ENCODE measurements at regions of chr12 and their contacts with region 1.

Region 1: GRCh38 chr12:18752280-18752920 is 14.5 kb downstream of the CAPZA3 start:
- DNase-seq: peak; percentile 25 to 55
- ATAC-seq: peak; percentile 21 to 73 (median 42)
- H3K4me3 ChIP-seq: no peak overlapping the region
- H3K27ac ChIP-seq: peak overlapping the region in 9 of 10 donors; percentile 67 to 90 (median 76)
- H3K4me1 ChIP-seq: peaks cover 6 to 65% (median 38%) of the 10 kb centered on the region in 9 donors
- H3K27me3 ChIP-seq: no peaks in the 10 kb centered on the region
- CTCF ChIP-seq: no peak

Region 2: DNA sequence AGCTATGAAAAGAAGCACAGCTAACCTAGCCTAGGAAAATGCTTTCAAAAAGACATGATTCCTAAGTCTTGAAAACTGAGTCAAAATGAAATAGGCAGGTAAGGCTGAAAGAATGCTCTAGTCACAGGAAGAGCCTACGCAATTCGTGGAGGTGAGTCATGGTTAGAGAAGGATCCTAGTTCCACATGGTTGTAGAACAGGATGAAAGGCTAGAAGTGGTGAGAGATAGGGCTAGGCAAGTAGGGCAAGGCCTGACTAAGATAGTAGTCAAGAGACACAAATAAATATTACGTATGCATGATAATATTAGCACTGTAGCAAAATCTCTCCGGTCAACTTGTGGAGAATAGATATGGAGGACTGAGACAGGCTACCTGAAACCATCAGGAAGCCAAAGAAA is 61.7 kb before region 1 on chr12:
- intact Hi-C with region 1: loop called in 1 of 10 experiments (anchors 5 kb)
- DNase-seq: no peak
- ATAC-seq: peak; percentile 46 to 98 (median 90)
- H3K4me3 ChIP-seq: no peak overlapping the region
- H3K27ac ChIP-seq: peak overlapping the region in 2 of 10 donors; percentile 37 to 49
- H3K4me1 ChIP-seq: peaks cover 0 to 9% (median 0%) of the 10 kb centered on the region in 9 donors
- H3K27me3 ChIP-seq: no peaks in the 10 kb centered on the region
- CTCF ChIP-seq: no peak

Region 3: GRCh38 chr12:18700271-18700670 is 52.1 kb before region 1 on chr12:
- intact Hi-C with region 1: loop called in 1 of 10 experiments (anchors 5 kb)
- DNase-seq: peak in 1 of 2 donors; percentile 48
- ATAC-seq: peak; percentile 83 to 99 (median 90)
- H3K4me3 ChIP-seq: no peak overlapping the region
- H3K27ac ChIP-seq: peak overlapping the region in 2 of 10 donors; percentile 29 to 53
- H3K4me1 ChIP-seq: peaks cover 0 to 11% (median 0%) of the 10 kb centered on the region in 9 donors
- H3K27me3 ChIP-seq: no peaks in the 10 kb centered on the region
- CTCF ChIP-seq: no peak

Region 4: GRCh38 chr12:18805516-18806248 is 53.3 kb after region 1 on chr12:
- intact Hi-C with region 1: loop called in 1 of 10 experiments (anchors 10 kb)
- DNase-seq: no peak
- ATAC-seq: peak in 2 of 8 donors; percentile 35 to 47
- H3K4me3 ChIP-seq: no peak overlapping the region
- H3K27ac ChIP-seq: peak overlapping the region in 1 of 10 donors; percentile 9
- H3K4me1 ChIP-seq: peaks cover 0 to 8% (median 0%) of the 10 kb centered on the region in 9 donors
- H3K27me3 ChIP-seq: no peaks in the 10 kb centered on the region
- CTCF ChIP-seq: peak in 2 of 9 donors; percentile 31

Region 5: GRCh38 chr12:19031032-19031431 is 278.6 kb after region 1 on chr12:
- intact Hi-C with region 1: loop called in 2 of 10 experiments (anchors 5 to 10 kb)
- DNase-seq: no peak
- ATAC-seq: peak in 5 of 8 donors; percentile 30 to 59 (median 50)
- H3K4me3 ChIP-seq: no peak overlapping the region
- H3K27ac ChIP-seq: no peak overlapping the region
- H3K4me1 ChIP-seq: peaks cover 0 to 14% (median 4%) of the 10 kb centered on the region in 9 donors
- H3K27me3 ChIP-seq: no peaks in the 10 kb centered on the region
- CTCF ChIP-seq: no peak

Region 6: DNA sequence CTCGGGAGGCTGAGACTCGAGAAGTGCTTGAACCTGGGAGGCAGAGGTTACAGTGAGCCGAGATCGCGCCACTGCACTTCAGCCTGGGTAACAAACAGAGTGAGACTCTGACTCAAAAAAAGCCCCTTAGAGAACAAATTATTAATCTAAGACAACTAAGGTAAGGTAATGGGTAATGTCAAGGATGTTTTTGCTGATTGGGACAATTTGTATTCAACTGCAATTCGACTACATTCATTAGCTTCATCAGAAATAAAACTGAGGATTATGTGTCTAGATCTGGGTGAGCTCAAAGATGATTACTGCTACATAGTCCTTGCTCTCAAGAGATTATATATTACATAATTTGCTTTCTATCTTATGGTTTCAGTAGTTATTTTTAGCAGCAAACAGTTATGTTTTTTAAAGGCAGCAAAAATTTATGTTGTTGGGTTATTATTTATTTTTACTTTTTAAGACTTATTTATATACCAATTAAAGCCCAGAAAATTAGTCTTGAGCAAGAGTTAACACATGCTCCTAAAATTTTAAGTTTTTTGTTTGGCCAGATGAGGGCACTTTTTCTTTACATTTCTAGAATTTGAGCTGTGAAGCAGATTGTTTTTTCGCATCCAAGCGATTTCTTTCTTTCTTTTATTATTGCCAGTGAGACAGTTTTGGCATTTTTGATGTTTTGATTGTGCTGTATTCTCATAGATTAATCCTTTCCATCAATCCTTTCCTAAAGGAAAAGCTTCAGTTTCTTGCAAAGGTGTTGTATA is 429.4 kb after region 1 on chr12:
- intact Hi-C with region 1: loop called in 2 of 10 experiments (anchors 5 to 10 kb)
- DNase-seq: no peak
- ATAC-seq: no peak
- H3K4me3 ChIP-seq: no peak overlapping the region
- H3K27ac ChIP-seq: peak overlapping the region in 6 of 10 donors; percentile 4 to 57 (median 34)
- H3K4me1 ChIP-seq: peaks cover 2 to 64% (median 28%) of the 10 kb centered on the region in 9 donors
- H3K27me3 ChIP-seq: no peaks in the 10 kb centered on the region
- CTCF ChIP-seq: peak in 5 of 9 donors; percentile 13 to 34 (median 25)